PC-9 (cell line): ENCODE measurements at regions of chr17 and their contacts with region 1.

Region 1: DNA sequence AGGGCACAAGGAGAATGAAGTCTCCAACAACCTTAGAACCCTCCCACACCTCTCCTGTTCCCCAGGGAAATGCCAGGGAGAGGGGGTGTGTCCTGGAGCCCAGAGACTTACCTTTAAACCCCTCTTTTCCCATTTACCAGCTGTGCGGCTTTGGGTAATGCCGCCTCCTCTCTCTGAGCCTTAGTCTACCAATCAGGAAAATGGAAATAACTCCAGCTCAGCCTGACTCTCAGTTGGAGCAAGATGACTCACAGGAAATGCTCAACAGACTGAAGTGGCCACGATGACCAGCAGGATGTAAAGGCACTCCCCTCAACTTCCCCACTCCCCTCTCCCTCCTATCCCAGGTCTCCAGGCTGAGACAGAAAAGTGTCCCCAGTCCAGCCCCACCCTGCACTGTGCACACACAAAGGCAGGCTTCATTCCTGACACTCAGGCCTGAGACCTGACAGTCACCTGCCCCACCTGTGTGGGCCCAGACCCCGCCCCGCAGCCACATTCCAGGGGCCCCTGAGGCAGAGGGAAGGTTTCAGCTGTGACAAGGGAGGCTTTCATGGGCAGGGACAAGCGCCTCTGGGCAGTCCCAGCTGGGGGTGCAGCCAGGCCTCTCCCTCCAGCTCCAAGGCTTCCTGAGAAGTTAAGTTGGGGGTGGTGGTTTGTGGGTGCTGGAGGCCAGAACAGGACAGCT is 3.0 kb upstream of the KRT15 start:
- DNase-seq: peak; percentile 97 to 98
- H3K4me3 ChIP-seq: peak overlapping the region; percentile 93; the same call in 1 of the 2 replicates
- H3K27ac ChIP-seq: peak overlapping the region; percentile 95
- H3K4me1 ChIP-seq: peaks cover 81% of the 10 kb centered on the region
- H3K27me3 ChIP-seq: no peaks in the 10 kb centered on the region
- CTCF ChIP-seq: no peak

Region 2: GRCh38 chr17:41322094-41322902 is 199.4 kb before region 1 on chr17:
- CTCF ChIA-PET with region 1: no interaction called
- POLR2A ChIA-PET with region 1: no interaction called
- intact Hi-C with region 1: loop called (anchors 10 kb)
- DNase-seq: peak in 1 of 2 experiments; percentile 22
- H3K4me3 ChIP-seq: no peak overlapping the region
- H3K27ac ChIP-seq: no peak overlapping the region
- H3K4me1 ChIP-seq: no peaks in the 10 kb centered on the region
- H3K27me3 ChIP-seq: no peaks in the 10 kb centered on the region
- CTCF ChIP-seq: peak; percentile 80

Region 3: DNA sequence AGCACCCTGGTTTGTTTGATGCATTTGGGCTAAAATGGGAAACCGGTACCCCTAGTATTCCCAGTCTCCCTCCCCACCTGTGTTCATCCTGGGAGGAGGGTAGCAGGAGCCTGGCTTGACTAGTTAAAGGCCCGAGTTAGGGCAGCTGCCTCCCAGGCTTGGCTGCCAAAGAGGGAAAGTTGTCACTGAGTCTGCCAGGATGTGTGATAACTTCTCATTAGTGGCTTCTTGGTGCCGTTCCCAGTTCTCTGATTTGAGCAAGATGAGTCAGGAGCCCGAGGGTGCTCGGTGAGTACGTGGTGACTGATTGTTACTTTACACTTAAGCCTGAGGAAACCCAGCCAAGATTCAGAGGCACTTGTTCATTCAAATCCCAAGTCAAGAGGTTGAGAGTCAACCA is 57.0 kb before region 1 on chr17:
- CTCF ChIA-PET with region 1: interaction called, 14 read pairs
- POLR2A ChIA-PET with region 1: interaction called, 11 read pairs
- intact Hi-C with region 1: no loop called
- DNase-seq: peak; percentile 73 to 93
- H3K4me3 ChIP-seq: no peak overlapping the region
- H3K27ac ChIP-seq: peak overlapping the region; percentile 50
- H3K4me1 ChIP-seq: peaks cover 20% of the 10 kb centered on the region
- H3K27me3 ChIP-seq: no peaks in the 10 kb centered on the region
- CTCF ChIP-seq: no peak

Region 4: GRCh38 chr17:41505809-41506731 is 15.6 kb before region 1 on chr17:
- CTCF ChIA-PET with region 1: interaction called, 4 read pairs
- POLR2A ChIA-PET with region 1: interaction called, 75 read pairs
- intact Hi-C with region 1: loop called (anchors 1 kb)
- DNase-seq: peak in 1 of 2 experiments; percentile 59
- H3K4me3 ChIP-seq: peak overlapping the region; percentile 58; the same call in 1 of the 2 replicates
- H3K27ac ChIP-seq: peak overlapping the region; percentile 94
- H3K4me1 ChIP-seq: peaks cover 84% of the 10 kb centered on the region
- H3K27me3 ChIP-seq: no peaks in the 10 kb centered on the region
- CTCF ChIP-seq: no peak

Region 5: GRCh38 chr17:41588126-41588810 is 66.5 kb after region 1 on chr17:
- CTCF ChIA-PET with region 1: no interaction called
- POLR2A ChIA-PET with region 1: no interaction called
- intact Hi-C with region 1: no loop called
- DNase-seq: no peak
- H3K4me3 ChIP-seq: no peak overlapping the region
- H3K27ac ChIP-seq: no peak overlapping the region
- H3K4me1 ChIP-seq: peaks cover 7% of the 10 kb centered on the region
- H3K27me3 ChIP-seq: no peaks in the 10 kb centered on the region
- CTCF ChIP-seq: no peak